Activated CD4-positive, alpha-beta memory T cell treated with anti-CD3 and anti-CD28 coated beads, Interleukin-2, amount 10 ng/mL, durations not matched to agents 7 days and 5 days (primary cell): ENCODE measurements at regions of chr2 and their contacts with region 1.

Region 1: DNA sequence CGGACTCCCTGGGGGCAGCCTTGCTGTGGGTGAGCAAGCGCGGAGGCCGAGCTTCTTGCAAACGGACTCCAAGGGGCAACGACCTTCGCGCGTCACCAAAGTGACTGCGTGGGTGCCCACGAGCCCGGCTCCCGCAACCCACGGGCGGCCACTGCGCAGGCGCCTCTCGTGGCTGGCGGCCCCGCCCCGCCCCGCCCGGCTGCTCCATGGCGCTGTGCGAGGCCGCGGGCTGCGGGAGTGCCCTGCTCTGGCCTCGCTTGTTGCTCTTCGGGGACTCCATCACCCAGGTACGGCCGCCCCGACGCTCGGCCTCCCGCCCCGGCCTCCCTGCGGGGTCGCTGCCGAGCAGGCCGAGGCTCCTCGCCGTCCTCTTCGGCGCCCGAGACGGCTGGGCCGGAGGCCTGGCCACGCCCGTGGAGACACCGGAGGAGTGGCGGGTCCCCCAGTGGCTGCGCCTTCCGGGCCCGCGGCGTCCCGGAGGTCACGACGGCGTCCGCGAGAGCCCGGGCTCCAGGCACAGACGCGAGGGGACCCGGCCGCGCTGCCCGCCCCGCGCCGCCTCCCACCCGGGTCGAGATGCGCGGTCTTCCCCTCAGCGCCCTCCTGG is at the start of gene IAH1:
- DNase-seq: peak; percentile 76
- H3K4me3 Mint-ChIP-seq: peak within 1 kb of the TSS; percentile 79
- H3K27ac Mint-ChIP-seq: peak within 1 kb of the TSS; percentile 80
- H3K4me1 Mint-ChIP-seq: peaks cover 52% of the 10 kb centered on the region
- H3K27me3 Mint-ChIP-seq: no peaks in the 10 kb centered on the region
- total RNA-seq, gene IAH1: 69.2 to 79.0 TPM

Region 2: GRCh38 chr2:9423100-9423921 is 51.2 kb before region 1 on chr2 and contains the starts of genes CPSF3 and ITGB1BP1:
- CTCF ChIA-PET with region 1: no interaction called
- POLR2A ChIA-PET with region 1: interaction called, 38 read pairs
- DNase-seq: peak; percentile 97
- H3K4me3 Mint-ChIP-seq: no peak within 1 kb of the TSS
- H3K27ac Mint-ChIP-seq: no peak within 1 kb of the TSS
- H3K4me1 Mint-ChIP-seq: peaks cover 40% of the 10 kb centered on the region
- H3K27me3 Mint-ChIP-seq: no peaks in the 10 kb centered on the region
- total RNA-seq, gene CPSF3: 49.7 to 51.7 TPM
- total RNA-seq, gene ITGB1BP1: 112 to 119 TPM

Region 3: DNA sequence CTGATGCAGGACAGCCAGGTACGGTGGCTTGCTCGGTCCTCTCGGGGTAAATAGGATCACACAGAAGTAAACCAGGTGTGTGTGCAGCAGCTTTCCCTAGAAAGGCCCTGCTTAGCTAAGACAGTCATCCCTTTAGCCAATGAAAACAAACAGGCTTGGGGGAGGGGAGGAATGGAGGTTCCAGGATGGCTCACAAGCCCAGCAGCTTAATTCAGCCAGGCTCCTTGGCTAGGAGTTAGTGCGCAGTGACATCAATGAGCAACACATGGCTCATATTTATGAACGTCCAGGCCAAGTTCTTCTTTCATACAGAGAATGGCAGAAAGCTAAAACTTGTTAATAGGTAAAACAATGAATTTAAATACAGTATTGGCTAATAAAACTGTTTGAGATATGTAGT is 10.1 kb after region 1 on chr2:
- CTCF ChIA-PET with region 1: no interaction called
- POLR2A ChIA-PET with region 1: interaction called, 19 read pairs
- DNase-seq: no peak
- H3K4me3 Mint-ChIP-seq: no peak overlapping the region
- H3K27ac Mint-ChIP-seq: no peak overlapping the region
- H3K4me1 Mint-ChIP-seq: peaks cover 8% of the 10 kb centered on the region
- H3K27me3 Mint-ChIP-seq: no peaks in the 10 kb centered on the region

Region 4: GRCh38 chr2:9675415-9676351 is 201.2 kb after region 1 on chr2:
- CTCF ChIA-PET with region 1: no interaction called
- POLR2A ChIA-PET with region 1: no interaction called
- DNase-seq: no peak
- H3K4me3 Mint-ChIP-seq: no peak overlapping the region
- H3K27ac Mint-ChIP-seq: no peak overlapping the region
- H3K4me1 Mint-ChIP-seq: peaks cover 12% of the 10 kb centered on the region
- H3K27me3 Mint-ChIP-seq: no peaks in the 10 kb centered on the region